IMR-90 (cell line): ENCODE measurements at regions of chr1 and their contacts with region 1.

Region 1: DNA sequence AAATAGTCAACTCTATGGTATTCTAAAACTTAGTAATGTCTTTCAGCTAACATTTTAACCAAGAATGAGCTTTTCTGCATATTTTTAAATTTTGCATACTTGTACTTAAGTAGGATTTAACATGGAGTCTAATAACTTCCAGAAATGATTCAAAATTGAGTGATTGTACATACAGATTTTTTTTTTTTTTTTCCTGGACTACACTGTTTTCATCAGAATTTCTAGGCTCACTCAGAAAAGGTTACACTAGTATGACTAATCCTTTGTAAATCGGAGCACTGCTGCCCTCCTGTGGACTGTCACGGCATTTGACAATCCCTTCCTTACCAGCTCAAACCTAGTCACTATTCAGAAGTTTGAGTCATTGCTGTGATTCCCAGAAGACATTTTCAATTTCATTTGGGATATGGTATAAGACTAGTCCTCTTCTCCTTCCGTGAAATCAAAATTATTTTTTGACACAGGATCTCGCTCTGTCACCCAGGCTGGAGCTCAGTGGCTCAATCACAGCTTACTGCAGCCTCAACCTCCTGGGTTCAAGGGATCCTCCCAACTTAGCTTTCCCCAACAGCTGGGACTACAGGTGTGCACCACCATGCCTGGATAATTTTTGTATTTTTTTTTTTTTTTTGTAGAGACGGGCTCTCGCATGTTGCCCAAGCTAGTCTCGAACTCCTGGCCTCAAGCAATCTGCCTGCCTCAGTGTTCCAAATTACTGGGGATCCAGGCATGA is 45.5 kb downstream of the CD46 start:
- DNase-seq: peak; percentile 89
- ATAC-seq: peak; percentile 97
- H3K4me3 ChIP-seq: no peak overlapping the region
- H3K27ac ChIP-seq: no peak overlapping the region
- H3K4me1 ChIP-seq: no peaks in the 10 kb centered on the region; the same call in 1 of the 2 replicates
- H3K27me3 ChIP-seq: no peaks in the 10 kb centered on the region
- CTCF ChIP-seq: peak; percentile 85
- POLR2A ChIP-seq: no peak
- RAD21 ChIP-seq: peak; percentile 65

Region 2: GRCh38 chr1:207227131-207227630 is 570.2 kb before region 1 on chr1:
- CTCF ChIA-PET with region 1: interaction called, 10 read pairs
- POLR2A ChIA-PET with region 1: no interaction called
- dilution Hi-C with region 1: no loop called
- in situ Hi-C with region 1: no loop called
- intact Hi-C with region 1: no loop called
- DNase-seq: no peak
- ATAC-seq: no peak
- H3K4me3 ChIP-seq: no peak overlapping the region
- H3K27ac ChIP-seq: no peak overlapping the region
- H3K4me1 ChIP-seq: no peaks in the 10 kb centered on the region; the same call in 1 of the 2 replicates
- H3K27me3 ChIP-seq: no peaks in the 10 kb centered on the region
- CTCF ChIP-seq: no peak
- POLR2A ChIP-seq: no peak
- RAD21 ChIP-seq: no peak

Region 3: DNA sequence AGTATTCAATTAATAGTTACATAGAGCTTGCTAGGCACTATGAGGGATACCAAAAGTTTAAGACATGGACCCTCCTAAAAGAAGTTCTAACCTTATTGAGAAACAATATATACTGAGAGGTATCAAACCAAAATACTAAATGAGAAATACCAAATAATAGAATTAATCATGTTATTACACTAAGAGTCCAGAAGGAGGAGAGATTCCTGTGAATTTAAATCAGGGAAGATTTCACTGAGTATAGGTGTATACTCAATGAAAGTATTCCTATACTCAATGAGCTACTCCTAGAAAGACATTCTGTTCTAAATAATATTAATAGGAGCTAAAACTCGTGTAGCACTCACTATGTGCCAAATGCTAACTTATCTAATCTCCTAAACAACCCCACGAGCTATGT is 143.1 kb before region 1 on chr1:
- CTCF ChIA-PET with region 1: interaction called, 6 read pairs
- POLR2A ChIA-PET with region 1: no interaction called
- dilution Hi-C with region 1: no loop called
- in situ Hi-C with region 1: no loop called
- intact Hi-C with region 1: loop called (anchors 1 kb)
- DNase-seq: peak; percentile 4
- ATAC-seq: peak; percentile 78
- H3K4me3 ChIP-seq: no peak overlapping the region
- H3K27ac ChIP-seq: no peak overlapping the region
- H3K4me1 ChIP-seq: no peaks in the 10 kb centered on the region
- H3K27me3 ChIP-seq: peaks cover 8% of the 10 kb centered on the region
- CTCF ChIP-seq: peak; percentile 38; the same call in 1 of the 2 replicates
- POLR2A ChIP-seq: no peak
- RAD21 ChIP-seq: peak; percentile 14; the same call in 1 of the 2 replicates

Region 4: DNA sequence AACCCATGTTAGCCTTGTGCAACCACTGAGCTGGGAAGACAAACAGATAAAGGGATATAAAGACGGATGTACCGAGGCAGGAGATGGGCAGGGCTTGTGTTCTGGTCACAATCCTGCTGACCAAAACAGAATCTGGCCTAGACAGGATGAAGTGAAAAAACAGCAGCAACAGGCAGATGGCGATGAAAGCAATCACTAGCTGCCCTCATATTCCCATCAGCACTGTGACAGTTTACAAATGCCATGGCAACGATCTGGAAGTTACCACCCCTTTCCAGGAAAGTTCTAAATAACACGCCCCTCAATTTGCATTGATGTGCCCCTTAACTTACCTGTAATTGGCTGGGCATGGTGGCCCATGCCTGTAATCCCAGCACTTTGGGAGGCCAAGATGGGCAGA is 86.1 kb before region 1 on chr1:
- CTCF ChIA-PET with region 1: no interaction called
- POLR2A ChIA-PET with region 1: no interaction called
- dilution Hi-C with region 1: no loop called
- in situ Hi-C with region 1: no loop called
- intact Hi-C with region 1: loop called (anchors 5 kb)
- DNase-seq: peak; percentile 18
- ATAC-seq: no peak; the same call in 1 of the 2 replicates
- H3K4me3 ChIP-seq: no peak overlapping the region
- H3K27ac ChIP-seq: no peak overlapping the region
- H3K4me1 ChIP-seq: peaks cover 3% of the 10 kb centered on the region; the same call in 1 of the 2 replicates
- H3K27me3 ChIP-seq: 0 out of 2 replicates have a peak, but pooled peaks cover 2% of the 10 kb centered on the region
- CTCF ChIP-seq: no peak
- POLR2A ChIP-seq: no peak
- RAD21 ChIP-seq: no peak